AG04450 (cell line): ENCODE measurements at regions of chr1 and their contacts with region 1.

Region 1: GRCh38 chr1:28648474-28649198 is at the start of gene RNU11:
- DNase-seq: peak; percentile 98
- H3K4me3 ChIP-seq: peak within 1 kb of the TSS; percentile 57
- H3K27ac ChIP-seq: peak within 1 kb of the TSS; percentile 89
- H3K27me3 ChIP-seq: no peaks in the 10 kb centered on the region
- CTCF ChIP-seq: no peak
- polyA plus RNA-seq, gene RNU11: not detected in 2 replicates

Region 2: GRCh38 chr1:28412731-28413130 is 235.9 kb before region 1 on chr1:
- CTCF ChIA-PET with region 1: no interaction called
- POLR2A ChIA-PET with region 1: interaction called, 11 read pairs
- DNase-seq: no peak
- H3K4me3 ChIP-seq: no peak overlapping the region
- H3K27ac ChIP-seq: no peak overlapping the region
- H3K27me3 ChIP-seq: no peaks in the 10 kb centered on the region
- CTCF ChIP-seq: no peak

Region 3: GRCh38 chr1:28668191-28668955 is 19.7 kb after region 1 on chr1 and contains the start of gene GMEB1:
- CTCF ChIA-PET with region 1: no interaction called
- POLR2A ChIA-PET with region 1: interaction called, 40 read pairs
- DNase-seq: no peak
- H3K4me3 ChIP-seq: peak within 1 kb of the TSS; percentile 75
- H3K27ac ChIP-seq: peak within 1 kb of the TSS; percentile 93
- H3K27me3 ChIP-seq: no peaks in the 10 kb centered on the region
- CTCF ChIP-seq: no peak
- polyA plus RNA-seq, gene GMEB1: 6.2 and 6.5 TPM in 2 replicates

Region 4: GRCh38 chr1:28751315-28752060 is 102.9 kb after region 1 on chr1:
- CTCF ChIA-PET with region 1: no interaction called
- POLR2A ChIA-PET with region 1: interaction called, 17 read pairs
- DNase-seq: no peak
- H3K4me3 ChIP-seq: no peak overlapping the region
- H3K27ac ChIP-seq: no peak overlapping the region
- H3K27me3 ChIP-seq: no peaks in the 10 kb centered on the region
- CTCF ChIP-seq: no peak